ENCODE measurements at regions of chr7 and their contacts with region 1.

Region 1: GRCh38 chr7:82729172-82730030 is 285.8 kb upstream of the CACNA2D1 start:
- DNase-seq: peak; percentile 22
- H3K4me3 ChIP-seq: no peak overlapping the region
- H3K27ac ChIP-seq: no peak overlapping the region
- H3K4me1 ChIP-seq: no peaks in the 10 kb centered on the region
- H3K27me3 ChIP-seq: no peaks in the 10 kb centered on the region
- CTCF ChIP-seq: peak; percentile 67 to 82

Region 2: GRCh38 chr7:81715984-81716588 is 1013.3 kb before region 1 on chr7:
- CTCF ChIA-PET with region 1: no interaction called
- dilution Hi-C with region 1: no loop called
- in situ Hi-C with region 1: no loop called
- intact Hi-C with region 1: loop called (anchors 2 kb)
- DNase-seq: peak; percentile 42
- H3K4me3 ChIP-seq: no peak overlapping the region
- H3K27ac ChIP-seq: no peak overlapping the region
- H3K4me1 ChIP-seq: no peaks in the 10 kb centered on the region
- H3K27me3 ChIP-seq: no peaks in the 10 kb centered on the region
- CTCF ChIP-seq: peak; percentile 59 to 86

Region 3: GRCh38 chr7:82044497-82045080 is 684.8 kb before region 1 on chr7:
- CTCF ChIA-PET with region 1: no interaction called
- dilution Hi-C with region 1: no loop called
- in situ Hi-C with region 1: loop called (anchors 10 to 25 kb)
- intact Hi-C with region 1: loop called (anchors 1 kb)
- DNase-seq: peak; percentile 29
- H3K4me3 ChIP-seq: no peak overlapping the region
- H3K27ac ChIP-seq: no peak overlapping the region
- H3K4me1 ChIP-seq: peaks cover 4% of the 10 kb centered on the region
- H3K27me3 ChIP-seq: no peaks in the 10 kb centered on the region
- CTCF ChIP-seq: peak; percentile 48 to 61

Region 4: GRCh38 chr7:82234457-82235049 is 494.8 kb before region 1 on chr7:
- CTCF ChIA-PET with region 1: no interaction called
- dilution Hi-C with region 1: no loop called
- in situ Hi-C with region 1: no loop called
- intact Hi-C with region 1: loop called (anchors 1 kb)
- DNase-seq: no peak
- H3K4me3 ChIP-seq: no peak overlapping the region
- H3K27ac ChIP-seq: no peak overlapping the region
- H3K4me1 ChIP-seq: no peaks in the 10 kb centered on the region
- H3K27me3 ChIP-seq: no peaks in the 10 kb centered on the region
- CTCF ChIP-seq: peak; percentile 60 to 64

Region 5: DNA sequence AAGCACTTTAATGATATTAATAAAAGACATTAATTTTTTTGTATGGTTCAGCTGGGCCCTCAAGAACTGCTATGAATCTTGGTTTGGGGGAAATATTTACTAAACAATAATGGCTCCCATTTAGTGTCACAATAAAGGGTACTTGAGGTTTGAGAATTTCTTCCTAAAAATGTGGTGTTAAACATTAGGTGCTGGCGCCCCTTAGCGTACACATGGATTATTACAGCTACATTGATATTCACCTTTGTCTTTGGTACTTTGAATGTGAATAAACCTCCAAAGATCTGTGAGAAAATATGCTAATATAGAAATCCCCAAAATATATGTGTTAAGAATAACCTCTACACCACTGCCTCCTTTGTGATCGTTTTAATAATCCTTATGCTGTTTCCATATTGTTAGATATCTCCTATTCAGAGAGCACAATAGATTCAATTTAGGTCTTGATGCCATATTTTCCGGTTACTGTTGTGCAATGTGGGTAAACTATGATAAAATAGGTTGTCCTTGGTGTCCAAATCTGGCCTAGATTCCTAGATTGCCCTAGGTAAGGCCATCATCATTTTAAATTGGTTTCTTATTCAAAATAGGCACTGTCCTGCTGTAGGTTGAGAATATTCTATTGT is 124.0 kb before region 1 on chr7:
- CTCF ChIA-PET with region 1: no interaction called
- dilution Hi-C with region 1: no loop called
- in situ Hi-C with region 1: no loop called
- intact Hi-C with region 1: loop called (anchors 5 kb)
- DNase-seq: peak; percentile 16
- H3K4me3 ChIP-seq: no peak overlapping the region
- H3K27ac ChIP-seq: no peak overlapping the region
- H3K4me1 ChIP-seq: no peaks in the 10 kb centered on the region
- H3K27me3 ChIP-seq: no peaks in the 10 kb centered on the region
- CTCF ChIP-seq: peak; percentile 74 to 75

Region 6: DNA sequence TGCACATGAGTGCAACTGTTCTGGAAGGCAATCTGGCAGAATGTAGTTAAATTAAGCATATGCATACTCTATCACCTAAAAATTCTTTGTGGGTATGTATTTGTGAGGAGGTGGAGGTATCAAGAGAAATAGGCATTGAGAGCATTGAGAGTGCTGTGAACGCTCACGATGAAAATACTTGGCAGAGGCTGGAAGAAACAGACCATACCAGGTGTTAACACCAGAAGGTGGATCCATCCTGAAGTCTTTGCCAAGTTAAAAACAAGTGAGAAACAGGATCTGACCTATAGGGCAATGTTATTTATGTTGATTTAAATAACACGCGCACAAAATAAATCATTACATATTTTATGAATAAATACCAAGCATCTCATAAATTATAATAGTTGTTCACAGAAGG is 121.7 kb after region 1 on chr7:
- CTCF ChIA-PET with region 1: no interaction called
- dilution Hi-C with region 1: no loop called
- in situ Hi-C with region 1: no loop called
- intact Hi-C with region 1: no loop called
- DNase-seq: no peak
- H3K4me3 ChIP-seq: no peak overlapping the region
- H3K27ac ChIP-seq: no peak overlapping the region
- H3K4me1 ChIP-seq: no peaks in the 10 kb centered on the region
- H3K27me3 ChIP-seq: no peaks in the 10 kb centered on the region
- CTCF ChIP-seq: no peak

Region 7: DNA sequence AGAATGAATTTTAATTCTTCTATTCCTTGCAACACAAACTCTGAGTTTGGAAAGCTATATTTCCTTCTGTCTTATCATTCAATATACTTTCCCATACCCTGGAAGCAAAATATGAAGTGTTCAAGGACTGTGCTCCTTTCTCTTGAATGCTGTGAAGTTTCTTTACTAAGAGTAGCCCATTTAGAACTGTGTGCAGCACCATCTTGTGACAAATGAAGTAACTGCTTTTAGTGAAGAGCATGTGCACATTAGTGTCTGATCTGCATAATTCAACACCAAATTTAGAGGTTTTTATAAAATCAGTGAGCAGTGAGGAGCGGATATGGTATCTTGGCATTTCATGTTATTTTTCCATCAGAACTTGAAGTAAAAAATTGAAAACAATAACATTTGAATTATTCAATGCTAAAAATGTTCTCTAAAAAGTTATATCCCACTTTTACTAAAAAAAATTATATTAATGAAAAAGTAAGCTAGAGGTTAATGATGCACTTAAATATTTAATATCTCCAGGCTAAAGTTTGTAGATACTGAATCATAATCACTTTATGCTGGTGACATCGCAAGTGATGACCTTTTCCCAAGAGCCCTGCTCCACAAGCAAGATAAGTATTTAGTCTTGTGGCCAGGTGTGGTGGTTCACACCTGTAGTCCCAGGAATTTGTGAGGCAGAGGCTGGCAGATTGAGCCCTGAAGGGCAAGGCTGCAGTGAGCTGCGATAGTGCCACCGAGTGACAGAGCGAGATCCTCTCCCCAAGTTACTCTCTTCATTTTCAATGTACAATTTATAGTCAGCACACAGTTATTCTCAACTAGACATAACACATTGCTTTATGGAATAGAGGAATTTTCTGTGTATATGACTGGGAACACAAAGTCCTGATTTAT is 542.1 kb after region 1 on chr7:
- CTCF ChIA-PET with region 1: no interaction called
- dilution Hi-C with region 1: no loop called
- in situ Hi-C with region 1: loop called in 1 of 2 experiments (anchors 10 kb)
- intact Hi-C with region 1: no loop called
- DNase-seq: peak; percentile 22
- H3K4me3 ChIP-seq: no peak overlapping the region
- H3K27ac ChIP-seq: no peak overlapping the region
- H3K4me1 ChIP-seq: no peaks in the 10 kb centered on the region
- H3K27me3 ChIP-seq: no peaks in the 10 kb centered on the region
- CTCF ChIP-seq: peak; percentile 48 to 74